ENCODE measurements at regions of chr9 and their contacts with region 1.

Region 1: DNA sequence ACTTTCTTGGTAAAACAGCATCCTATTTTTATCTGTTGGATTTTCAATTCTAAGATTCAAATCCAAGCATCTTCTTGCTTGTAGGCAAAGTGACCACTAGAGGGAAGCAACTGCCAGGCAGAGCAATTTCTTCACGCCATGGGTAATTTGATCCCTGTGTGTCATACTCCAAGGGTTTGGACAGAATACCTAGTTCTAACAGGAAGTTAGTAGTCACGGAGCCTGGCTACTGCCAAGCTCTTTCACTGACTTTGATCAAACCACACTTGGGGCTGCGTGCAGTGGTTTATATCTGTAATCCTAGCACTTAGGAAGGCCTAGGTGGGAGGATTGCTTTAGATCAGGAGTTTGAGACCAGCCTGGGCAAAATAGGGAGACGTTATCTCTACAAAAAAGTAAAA is 473.6 kb upstream of the TNC start:
- DNase-seq: peak; percentile 57
- H3K4me3 ChIP-seq: no peak overlapping the region
- H3K27ac ChIP-seq: peak overlapping the region; percentile 30 to 99; a peak in 3 of 4 replicates
- H3K4me1 ChIP-seq: peaks cover 17 to 36% of the 10 kb centered on the region in 2 experiments
- H3K27me3 ChIP-seq: no peaks in the 10 kb centered on the region
- CTCF ChIP-seq: peak; percentile 97
- EP300 ChIP-seq: peak; percentile 27 to 69; a peak in 2 of 4 replicates
- RAD21 ChIP-seq: peak; percentile 95

Region 2: GRCh38 chr9:115373000-115373709 is 218.4 kb before region 1 on chr9:
- CTCF ChIA-PET with region 1: no interaction called
- POLR2A ChIA-PET with region 1: no interaction called
- DNase-seq: no peak
- H3K4me3 ChIP-seq: no peak overlapping the region
- H3K27ac ChIP-seq: peak overlapping the region; percentile 28 to 89; a peak in 3 of 4 replicates
- H3K4me1 ChIP-seq: peaks cover 16 to 30% of the 10 kb centered on the region in 2 experiments; a peak in 3 of 4 replicates
- H3K27me3 ChIP-seq: no peaks in the 10 kb centered on the region
- CTCF ChIP-seq: no peak
- EP300 ChIP-seq: peak in 1 of 2 experiments; percentile 97; a peak in 2 of 4 replicates
- RAD21 ChIP-seq: no peak

Region 3: GRCh38 chr9:115507148-115507547 is 84.4 kb before region 1 on chr9:
- CTCF ChIA-PET with region 1: no interaction called
- POLR2A ChIA-PET with region 1: no interaction called
- DNase-seq: no peak
- H3K4me3 ChIP-seq: no peak overlapping the region
- H3K27ac ChIP-seq: no peak overlapping the region
- H3K4me1 ChIP-seq: no peaks in the 10 kb centered on the region
- H3K27me3 ChIP-seq: no peaks in the 10 kb centered on the region
- CTCF ChIP-seq: no peak
- EP300 ChIP-seq: no peak
- RAD21 ChIP-seq: no peak

Region 4: GRCh38 chr9:115556432-115556831 is 35.2 kb before region 1 on chr9:
- CTCF ChIA-PET with region 1: no interaction called
- POLR2A ChIA-PET with region 1: no interaction called
- DNase-seq: no peak
- H3K4me3 ChIP-seq: no peak overlapping the region
- H3K27ac ChIP-seq: no peak overlapping the region
- H3K4me1 ChIP-seq: peaks cover 0 to 7% of the 10 kb centered on the region in 2 experiments; a peak in 2 of 4 replicates
- H3K27me3 ChIP-seq: no peaks in the 10 kb centered on the region
- CTCF ChIP-seq: no peak
- EP300 ChIP-seq: no peak
- RAD21 ChIP-seq: no peak

Region 5: GRCh38 chr9:115604831-115605483 is 13.4 kb after region 1 on chr9:
- CTCF ChIA-PET with region 1: interaction called, 37 read pairs
- POLR2A ChIA-PET with region 1: no interaction called
- DNase-seq: no peak
- H3K4me3 ChIP-seq: no peak overlapping the region
- H3K27ac ChIP-seq: peak overlapping the region in 1 of 2 experiments; percentile 99; a peak in 2 of 4 replicates
- H3K4me1 ChIP-seq: peaks cover 2 to 28% of the 10 kb centered on the region in 2 experiments; a peak in 3 of 4 replicates
- H3K27me3 ChIP-seq: no peaks in the 10 kb centered on the region
- CTCF ChIP-seq: no peak
- EP300 ChIP-seq: peak in 1 of 2 experiments; percentile 92; a peak in 2 of 4 replicates
- RAD21 ChIP-seq: no peak

Region 6: DNA sequence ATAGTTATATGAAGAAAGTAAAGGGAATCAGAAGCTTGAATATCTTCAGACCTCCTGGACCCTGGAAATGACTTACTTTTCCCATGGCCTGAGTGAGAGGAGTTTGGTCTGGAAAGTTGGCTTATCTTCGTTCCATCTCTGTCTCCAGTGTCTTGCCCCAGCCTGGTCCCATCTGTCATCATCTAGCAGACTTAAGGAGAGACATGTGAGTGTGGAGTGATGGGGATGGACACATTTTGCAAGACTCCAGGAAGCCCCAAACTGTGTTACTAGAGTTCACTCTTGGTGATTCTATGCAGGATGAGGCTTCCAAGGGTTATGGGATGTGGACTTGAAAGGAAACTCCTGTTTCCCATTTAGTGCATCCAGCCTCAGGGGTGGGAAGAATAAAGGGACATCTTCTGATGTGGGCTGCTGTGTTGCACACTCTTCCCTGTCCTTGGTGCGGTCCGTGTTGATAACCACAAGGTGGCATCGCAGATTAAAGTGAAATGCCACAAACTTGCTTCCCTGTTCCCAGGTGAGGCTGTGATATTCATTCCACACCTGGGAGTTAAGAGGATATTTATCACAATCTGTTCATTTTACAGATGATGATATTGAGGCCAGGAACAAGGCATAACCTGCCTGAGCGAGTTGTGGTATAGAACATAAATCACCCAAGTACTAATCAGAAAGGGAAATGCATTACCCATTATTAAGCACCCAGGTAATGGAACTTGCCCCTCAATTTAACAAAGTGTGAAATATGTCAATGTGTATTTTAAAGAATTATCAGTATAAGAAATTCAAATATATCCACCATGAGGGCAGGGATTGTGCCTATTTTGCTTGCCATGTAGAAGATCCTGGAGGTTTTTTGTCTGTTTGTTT is 292.1 kb after region 1 on chr9:
- CTCF ChIA-PET with region 1: interaction called, 29 read pairs
- POLR2A ChIA-PET with region 1: no interaction called
- DNase-seq: peak; percentile 19
- H3K4me3 ChIP-seq: no peak overlapping the region
- H3K27ac ChIP-seq: no peak overlapping the region; a peak in 1 of 4 replicates
- H3K4me1 ChIP-seq: peaks cover 0 to 14% of the 10 kb centered on the region in 2 experiments; a peak in 2 of 4 replicates
- H3K27me3 ChIP-seq: no peaks in the 10 kb centered on the region
- CTCF ChIP-seq: peak; percentile 74
- EP300 ChIP-seq: no peak
- RAD21 ChIP-seq: peak; percentile 80

Region 7: GRCh38 chr9:116494815-116495634 is 903.4 kb after region 1 on chr9:
- CTCF ChIA-PET with region 1: interaction called, 16 read pairs
- POLR2A ChIA-PET with region 1: no interaction called
- DNase-seq: no peak
- H3K4me3 ChIP-seq: no peak overlapping the region; a peak in 1 of 4 replicates
- H3K27ac ChIP-seq: no peak overlapping the region
- H3K4me1 ChIP-seq: peaks cover 8 to 12% of the 10 kb centered on the region in 2 experiments; a peak in 3 of 4 replicates
- H3K27me3 ChIP-seq: no peaks in the 10 kb centered on the region
- CTCF ChIP-seq: peak; percentile 57
- EP300 ChIP-seq: no peak
- RAD21 ChIP-seq: peak; percentile 47

Region 8: GRCh38 chr9:116572095-116572748 is 980.6 kb after region 1 on chr9:
- CTCF ChIA-PET with region 1: interaction called, 100 read pairs
- POLR2A ChIA-PET with region 1: no interaction called
- DNase-seq: peak; percentile 84
- H3K4me3 ChIP-seq: no peak overlapping the region; a peak in 1 of 4 replicates
- H3K27ac ChIP-seq: peak overlapping the region in 1 of 2 experiments; percentile 16; a peak in 1 of 4 replicates
- H3K4me1 ChIP-seq: peaks cover 4 to 49% of the 10 kb centered on the region in 2 experiments; a peak in 2 of 4 replicates
- H3K27me3 ChIP-seq: no peaks in the 10 kb centered on the region
- CTCF ChIP-seq: peak; percentile 92
- EP300 ChIP-seq: 0 out of 4 replicates have a peak, but pooled peaks of 1 of the 2 experiments have one; percentile 10
- RAD21 ChIP-seq: peak; percentile 98

Region 9: GRCh38 chr9:116661037-116661954 is 1069.7 kb after region 1 on chr9:
- CTCF ChIA-PET with region 1: interaction called, 23 read pairs
- POLR2A ChIA-PET with region 1: no interaction called
- DNase-seq: peak; percentile 53
- H3K4me3 ChIP-seq: no peak overlapping the region; a peak in 1 of 4 replicates
- H3K27ac ChIP-seq: no peak overlapping the region
- H3K4me1 ChIP-seq: no peaks in the 10 kb centered on the region; a peak in 1 of 4 replicates
- H3K27me3 ChIP-seq: no peaks in the 10 kb centered on the region
- CTCF ChIP-seq: peak; percentile 80
- EP300 ChIP-seq: 0 out of 4 replicates have a peak, but pooled peaks of 1 of the 2 experiments have one; percentile 20
- RAD21 ChIP-seq: peak; percentile 92